ENCODE measurements at regions of chr21 and their contacts with region 1.

Region 1: GRCh38 chr21:31088315-31088714 is 50.0 kb upstream of the KRTAP19-8 start:
- DNase-seq: peak in 2 of 3 donors; percentile 54 to 56
- ATAC-seq: no peak
- H3K4me3 ChIP-seq: no peak overlapping the region
- H3K27ac ChIP-seq: no peak overlapping the region
- H3K4me1 ChIP-seq: no peaks in the 10 kb centered on the region
- H3K27me3 ChIP-seq: no peaks in the 10 kb centered on the region

Region 2: DNA sequence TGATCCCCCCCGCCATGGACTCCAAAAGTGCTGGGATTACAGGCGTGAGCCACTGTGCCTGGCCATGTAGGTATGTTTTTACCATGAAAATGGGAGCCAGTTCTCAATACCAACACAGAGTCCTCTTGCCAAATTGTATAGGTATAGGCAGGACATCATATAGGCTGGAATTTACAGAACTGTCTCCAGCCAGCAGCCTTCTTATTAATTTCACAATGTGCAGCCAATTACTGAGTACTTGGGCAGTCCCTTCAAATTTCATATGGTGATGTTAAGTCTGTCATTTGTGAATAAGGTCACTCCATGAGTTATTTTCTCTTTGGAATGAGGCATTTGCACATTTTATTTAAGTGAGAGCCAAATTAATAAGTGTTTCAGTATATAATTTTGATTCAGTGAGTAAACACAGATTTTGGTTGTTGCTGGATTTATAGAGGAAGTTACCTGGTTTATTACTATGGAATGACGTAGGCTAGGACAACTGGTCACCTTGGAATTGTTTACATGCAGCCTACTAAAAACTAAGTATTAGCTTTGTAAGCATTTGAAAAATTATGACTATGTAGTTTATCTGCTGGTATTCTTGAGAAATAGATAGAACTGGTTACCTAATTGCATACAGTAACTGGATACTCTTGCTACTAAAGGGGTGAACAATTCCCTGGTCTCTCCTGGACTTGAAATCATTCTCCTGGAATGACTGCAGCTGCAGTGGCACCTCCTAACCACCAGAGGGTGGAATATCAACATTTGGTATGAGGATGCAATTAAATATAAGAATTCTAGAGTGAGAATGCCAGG is 747.7 kb before region 1 on chr21:
- intact Hi-C with region 1: loop called in 3 of 4 experiments (anchors 10 kb)
- DNase-seq: peak in 1 of 3 donors; percentile 64
- ATAC-seq: no peak
- H3K4me3 ChIP-seq: no peak overlapping the region
- H3K27ac ChIP-seq: no peak overlapping the region
- H3K4me1 ChIP-seq: no peaks in the 10 kb centered on the region
- H3K27me3 ChIP-seq: no peaks in the 10 kb centered on the region

Region 3: GRCh38 chr21:30434033-30434631 is 654.2 kb before region 1 on chr21:
- intact Hi-C with region 1: loop called in 1 of 4 experiments (anchors 10 kb)
- DNase-seq: no peak
- ATAC-seq: peak; percentile 28 to 62
- H3K4me3 ChIP-seq: no peak overlapping the region
- H3K27ac ChIP-seq: no peak overlapping the region
- H3K4me1 ChIP-seq: no peaks in the 10 kb centered on the region
- H3K27me3 ChIP-seq: no peaks in the 10 kb centered on the region

Region 4: DNA sequence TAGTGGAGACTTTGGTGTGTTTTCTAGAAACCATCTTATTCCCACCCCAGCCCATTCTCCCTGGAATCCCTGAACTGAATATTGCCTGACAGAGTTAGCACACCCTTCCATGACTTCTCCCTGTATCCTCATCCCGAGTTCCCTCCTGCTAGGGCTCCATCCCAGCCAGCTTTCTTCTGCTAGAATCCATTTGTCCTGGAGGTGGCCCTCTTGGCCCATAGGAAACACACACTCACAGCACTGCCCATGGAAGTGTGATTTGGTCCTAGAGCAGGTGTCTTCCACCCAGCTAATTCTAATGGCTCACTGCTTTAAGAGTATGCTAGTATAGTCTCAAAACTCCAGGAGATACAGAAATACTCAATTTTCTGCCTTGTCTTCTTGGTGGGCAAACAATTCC is 644.1 kb before region 1 on chr21:
- intact Hi-C with region 1: loop called in 2 of 4 experiments (anchors 10 kb)
- DNase-seq: no peak
- ATAC-seq: peak; percentile 44 to 65
- H3K4me3 ChIP-seq: no peak overlapping the region
- H3K27ac ChIP-seq: no peak overlapping the region
- H3K4me1 ChIP-seq: no peaks in the 10 kb centered on the region
- H3K27me3 ChIP-seq: no peaks in the 10 kb centered on the region

Region 5: DNA sequence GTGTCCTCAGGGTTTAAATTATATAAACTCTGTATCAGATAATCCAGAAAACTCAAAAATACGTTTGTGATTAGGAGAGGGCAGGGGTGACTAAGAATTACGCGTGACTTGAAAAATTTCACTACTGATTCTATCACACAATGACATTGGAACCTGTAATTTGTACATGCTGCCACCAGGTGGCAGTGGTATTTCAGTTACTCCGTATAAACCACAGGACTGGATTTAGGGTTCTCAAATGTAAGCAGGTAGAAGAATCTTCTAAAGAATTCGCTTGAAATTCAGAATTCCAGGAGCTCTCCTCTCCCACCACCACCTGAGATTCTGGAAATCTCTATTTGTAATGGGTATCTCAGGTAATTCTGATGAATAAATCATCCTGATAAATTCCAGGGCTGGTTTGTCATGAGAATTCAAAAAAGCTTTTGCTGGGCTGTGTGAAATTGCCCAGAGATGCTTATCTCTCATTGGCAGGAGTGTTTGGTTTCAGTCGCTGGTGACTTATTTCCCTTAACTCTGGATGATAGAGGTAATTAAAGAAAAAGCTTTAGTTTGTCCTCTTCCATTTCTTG is 257.0 kb before region 1 on chr21:
- intact Hi-C with region 1: loop called in 3 of 4 experiments (anchors 10 kb)
- DNase-seq: no peak
- ATAC-seq: no peak
- H3K4me3 ChIP-seq: no peak overlapping the region
- H3K27ac ChIP-seq: no peak overlapping the region
- H3K4me1 ChIP-seq: no peaks in the 10 kb centered on the region
- H3K27me3 ChIP-seq: no peaks in the 10 kb centered on the region